ENCODE measurements at regions of chr9 and their contacts with region 1.

Region 1: GRCh38 chr9:15422372-15423230 is at the start of gene SNAPC3:
- DNase-seq: peak; percentile 90
- H3K4me3 ChIP-seq: peak within 1 kb of the TSS; percentile 90
- H3K27ac ChIP-seq: peak within 1 kb of the TSS; percentile 80
- H3K4me1 ChIP-seq: no peaks in the 10 kb centered on the region
- H3K27me3 ChIP-seq: no peaks in the 10 kb centered on the region
- CTCF ChIP-seq: no peak
- total RNA-seq, gene SNAPC3: 21.8 and 26.2 TPM in 2 replicates

Region 2: GRCh38 chr9:15277400-15278090 is 145.1 kb before region 1 on chr9:
- CTCF ChIA-PET with region 1: no interaction called
- POLR2A ChIA-PET with region 1: no interaction called
- intact Hi-C with region 1: loop called (anchors 10 kb)
- DNase-seq: peak; percentile 12
- H3K4me3 ChIP-seq: no peak overlapping the region
- H3K27ac ChIP-seq: no peak overlapping the region
- H3K4me1 ChIP-seq: no peaks in the 10 kb centered on the region
- H3K27me3 ChIP-seq: no peaks in the 10 kb centered on the region
- CTCF ChIP-seq: peak; percentile 47; the same call in 1 of the 2 replicates

Measured in A673 (cell line).